ENCODE measurements at regions of chr7 and their contacts with region 1.

Region 1: GRCh38 chr7:28621369-28621841 is 209.1 kb downstream of the CREB5 start:
- DNase-seq: peak; percentile 45
- ATAC-seq: peak; percentile 82
- H3K4me3 ChIP-seq: no peak overlapping the region
- H3K27ac ChIP-seq: peak overlapping the region; percentile 45; the same call in 1 of the 2 replicates
- H3K4me1 ChIP-seq: peaks cover 3% of the 10 kb centered on the region; the same call in 1 of the 2 replicates
- H3K27me3 ChIP-seq: no peaks in the 10 kb centered on the region
- CTCF ChIP-seq: no peak
- EP300 ChIP-seq: peak; percentile 76 to 90; a peak in 3 of 4 replicates
- POLR2A ChIP-seq: no peak
- RAD21 ChIP-seq: 0 out of 2 replicates have a peak, but pooled peaks have one; percentile 19

Region 2: DNA sequence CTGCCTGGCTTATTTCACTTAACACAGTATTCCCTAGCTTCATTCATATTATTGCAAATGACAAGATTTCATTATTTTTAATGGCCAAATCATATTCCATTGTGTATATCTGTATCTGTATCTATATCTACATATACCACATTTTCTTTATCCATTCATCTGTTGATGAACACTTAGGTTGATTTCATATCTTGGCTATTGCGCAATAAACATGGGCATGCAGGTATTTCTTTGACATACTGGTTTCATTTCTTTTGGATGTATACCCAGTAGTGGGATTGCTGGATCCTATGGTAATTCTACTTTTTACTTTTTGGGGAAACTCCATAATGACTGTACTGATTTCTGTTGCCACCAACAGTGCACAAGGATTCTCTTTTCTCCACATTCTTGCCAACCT is 277.9 kb before region 1 on chr7:
- CTCF ChIA-PET with region 1: no interaction called
- POLR2A ChIA-PET with region 1: no interaction called
- RAD21 ChIA-PET with region 1: no interaction called
- SMC1A ChIA-PET with region 1: no interaction called
- in situ Hi-C with region 1: no loop called
- intact Hi-C with region 1: no loop called
- DNase-seq: no peak
- ATAC-seq: no peak
- H3K4me3 ChIP-seq: no peak overlapping the region
- H3K27ac ChIP-seq: no peak overlapping the region
- H3K4me1 ChIP-seq: no peaks in the 10 kb centered on the region
- H3K27me3 ChIP-seq: peaks cover 0 to 7% of the 10 kb centered on the region in 2 experiments; a peak in 1 of 4 replicates
- CTCF ChIP-seq: no peak
- EP300 ChIP-seq: no peak
- POLR2A ChIP-seq: no peak
- RAD21 ChIP-seq: no peak

Region 3: GRCh38 chr7:28520074-28521015 is 101.1 kb before region 1 on chr7:
- CTCF ChIA-PET with region 1: interaction called, 3 read pairs
- POLR2A ChIA-PET with region 1: no interaction called
- RAD21 ChIA-PET with region 1: no interaction called
- SMC1A ChIA-PET with region 1: interaction called, 11 read pairs
- in situ Hi-C with region 1: no loop called
- intact Hi-C with region 1: no loop called
- DNase-seq: no peak
- ATAC-seq: no peak
- H3K4me3 ChIP-seq: no peak overlapping the region
- H3K27ac ChIP-seq: no peak overlapping the region
- H3K4me1 ChIP-seq: peaks cover 14% of the 10 kb centered on the region
- H3K27me3 ChIP-seq: no peaks in the 10 kb centered on the region
- CTCF ChIP-seq: no peak
- EP300 ChIP-seq: no peak
- POLR2A ChIP-seq: no peak
- RAD21 ChIP-seq: no peak

Region 4: DNA sequence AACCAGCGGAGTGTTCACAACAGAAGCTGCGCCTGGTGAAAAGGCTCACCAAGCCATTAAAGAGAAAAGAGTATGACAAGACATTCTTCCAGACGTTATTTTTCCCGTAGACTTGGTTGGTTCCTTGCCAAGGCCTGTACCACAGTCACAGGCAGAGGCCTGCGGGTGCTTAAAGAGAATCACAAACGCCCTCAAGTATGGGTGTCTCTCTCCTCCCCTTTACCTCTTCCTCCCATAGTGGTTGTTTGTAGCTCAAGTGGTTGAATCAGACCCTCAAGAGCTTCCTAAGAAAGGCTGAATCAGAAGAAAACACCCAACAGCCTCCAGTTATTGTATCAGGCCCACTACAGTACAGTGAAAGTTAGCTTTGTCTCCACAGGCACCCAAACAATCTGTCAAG is 40.1 kb before region 1 on chr7:
- CTCF ChIA-PET with region 1: interaction called, 22 read pairs
- POLR2A ChIA-PET with region 1: interaction called, 9 read pairs
- RAD21 ChIA-PET with region 1: interaction called, 130 read pairs
- SMC1A ChIA-PET with region 1: interaction called, 151 read pairs
- in situ Hi-C with region 1: no loop called
- intact Hi-C with region 1: no loop called
- DNase-seq: no peak
- ATAC-seq: peak; percentile 25; the same call in 2 of the 3 replicates
- H3K4me3 ChIP-seq: no peak overlapping the region
- H3K27ac ChIP-seq: no peak overlapping the region
- H3K4me1 ChIP-seq: no peaks in the 10 kb centered on the region
- H3K27me3 ChIP-seq: no peaks in the 10 kb centered on the region
- CTCF ChIP-seq: no peak
- EP300 ChIP-seq: no peak
- POLR2A ChIP-seq: no peak
- RAD21 ChIP-seq: no peak

Region 5: GRCh38 chr7:28608731-28609130 is 12.7 kb before region 1 on chr7:
- CTCF ChIA-PET with region 1: interaction called, 9 read pairs
- POLR2A ChIA-PET with region 1: interaction called, 3 read pairs
- RAD21 ChIA-PET with region 1: interaction called, 12 read pairs
- SMC1A ChIA-PET with region 1: interaction called, 16 read pairs
- in situ Hi-C with region 1: no loop called
- intact Hi-C with region 1: no loop called
- DNase-seq: no peak
- ATAC-seq: no peak
- H3K4me3 ChIP-seq: no peak overlapping the region
- H3K27ac ChIP-seq: no peak overlapping the region
- H3K4me1 ChIP-seq: no peaks in the 10 kb centered on the region; the same call in 1 of the 2 replicates
- H3K27me3 ChIP-seq: no peaks in the 10 kb centered on the region; a peak in 1 of 4 replicates
- CTCF ChIP-seq: no peak
- EP300 ChIP-seq: no peak
- POLR2A ChIP-seq: no peak
- RAD21 ChIP-seq: no peak

Region 6: DNA sequence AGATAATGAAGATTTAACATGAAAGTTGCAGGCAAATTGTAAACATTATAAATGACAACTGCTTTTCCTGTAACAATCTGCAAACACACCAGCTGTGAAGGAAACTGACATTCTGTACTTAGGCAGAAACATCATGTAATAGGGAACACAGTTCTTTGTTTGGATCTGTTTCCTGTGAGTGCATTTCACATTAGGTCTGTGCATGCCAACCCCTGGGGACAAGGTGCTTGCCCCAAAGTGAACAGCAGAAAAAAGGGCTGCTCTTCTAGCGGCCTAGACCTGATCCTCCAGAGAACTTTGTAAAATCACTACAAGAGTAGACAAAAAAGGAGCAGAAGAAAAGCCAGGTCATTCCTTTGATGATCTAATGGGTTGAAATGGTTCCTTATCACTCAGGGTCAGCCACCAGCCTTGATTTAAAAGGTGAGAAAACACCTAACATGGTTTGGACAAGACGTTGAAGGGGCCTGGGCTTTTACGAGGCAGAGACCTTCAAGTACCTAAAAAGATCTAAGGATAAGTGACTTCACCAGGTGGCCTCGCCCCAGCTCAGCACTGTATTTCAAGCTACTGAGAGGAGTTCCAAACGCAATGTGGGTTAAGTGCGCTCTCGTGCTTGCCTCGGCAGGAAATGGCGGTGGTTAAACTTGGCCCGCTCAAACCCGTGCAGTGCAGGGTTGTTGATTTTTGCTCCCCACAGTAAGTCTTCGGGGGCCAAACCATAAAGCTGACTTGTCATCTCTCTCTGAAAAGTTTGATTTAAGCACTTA is 40.6 kb after region 1 on chr7:
- CTCF ChIA-PET with region 1: no interaction called
- POLR2A ChIA-PET with region 1: no interaction called
- RAD21 ChIA-PET with region 1: no interaction called
- SMC1A ChIA-PET with region 1: no interaction called
- in situ Hi-C with region 1: no loop called
- intact Hi-C with region 1: no loop called
- DNase-seq: no peak
- ATAC-seq: peak; percentile 79
- H3K4me3 ChIP-seq: no peak overlapping the region
- H3K27ac ChIP-seq: peak overlapping the region; percentile 25
- H3K4me1 ChIP-seq: peaks cover 9% of the 10 kb centered on the region
- H3K27me3 ChIP-seq: no peaks in the 10 kb centered on the region
- CTCF ChIP-seq: no peak
- EP300 ChIP-seq: no peak
- POLR2A ChIP-seq: peak; percentile 35; the same call in 1 of the 2 replicates
- RAD21 ChIP-seq: no peak

Region 7: DNA sequence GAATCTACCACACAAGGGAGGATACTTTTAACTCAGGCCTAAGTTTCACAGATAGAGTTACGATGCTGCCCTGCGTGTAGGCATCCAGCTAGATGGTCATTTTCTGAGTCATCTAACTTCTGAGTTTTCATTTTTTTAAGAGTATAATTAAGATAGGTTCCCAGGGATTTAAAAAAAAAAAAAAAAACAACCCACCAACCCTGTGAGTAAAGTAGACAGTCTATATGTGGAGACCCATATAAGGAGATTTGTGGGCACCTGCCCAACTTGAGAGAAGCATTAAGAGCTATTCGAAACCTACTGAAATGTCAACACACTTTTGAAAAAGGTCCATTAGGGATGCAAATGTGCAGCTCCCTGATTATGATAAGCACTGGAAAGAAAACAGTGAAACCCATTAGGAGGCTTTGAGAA is 79.4 kb after region 1 on chr7:
- CTCF ChIA-PET with region 1: no interaction called
- POLR2A ChIA-PET with region 1: interaction called, 10 read pairs
- RAD21 ChIA-PET with region 1: no interaction called
- SMC1A ChIA-PET with region 1: interaction called, 8 read pairs
- in situ Hi-C with region 1: no loop called
- intact Hi-C with region 1: no loop called
- DNase-seq: no peak
- ATAC-seq: peak; percentile 23
- H3K4me3 ChIP-seq: no peak overlapping the region
- H3K27ac ChIP-seq: no peak overlapping the region
- H3K4me1 ChIP-seq: peaks cover 18% of the 10 kb centered on the region
- H3K27me3 ChIP-seq: no peaks in the 10 kb centered on the region
- CTCF ChIP-seq: no peak
- EP300 ChIP-seq: no peak
- POLR2A ChIP-seq: no peak
- RAD21 ChIP-seq: no peak

Region 8: DNA sequence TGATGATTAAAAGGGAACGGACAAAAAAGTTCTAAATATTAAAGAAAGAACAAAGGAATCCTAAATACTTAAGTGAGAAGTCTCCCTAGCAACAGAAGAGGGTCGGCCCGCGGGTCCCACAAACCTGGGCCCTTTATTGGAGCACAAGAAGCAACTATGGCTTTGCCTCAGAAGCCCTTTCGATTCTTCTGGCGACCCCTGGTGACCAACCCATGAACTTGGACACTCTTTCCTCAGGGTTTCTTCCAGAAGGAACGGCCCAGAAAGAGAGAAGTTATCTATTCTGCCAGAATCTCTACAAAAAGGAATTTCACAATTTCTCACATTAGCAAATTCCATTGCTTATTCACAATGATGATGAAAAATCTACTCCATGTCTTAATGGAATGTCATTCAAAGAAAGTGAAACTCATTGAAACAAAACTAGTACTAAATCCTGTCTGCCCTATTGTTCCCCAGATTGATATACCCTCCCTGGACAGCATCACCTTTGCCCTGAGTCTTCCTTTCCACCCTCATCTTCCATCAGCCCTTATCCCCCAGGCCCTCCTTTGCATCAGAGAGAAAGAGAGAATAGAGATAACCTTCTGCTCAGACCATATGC is 481.2 kb after region 1 on chr7:
- CTCF ChIA-PET with region 1: no interaction called
- POLR2A ChIA-PET with region 1: no interaction called
- RAD21 ChIA-PET with region 1: no interaction called
- SMC1A ChIA-PET with region 1: no interaction called
- in situ Hi-C with region 1: no loop called
- intact Hi-C with region 1: no loop called
- DNase-seq: no peak
- ATAC-seq: peak; percentile 61
- H3K4me3 ChIP-seq: no peak overlapping the region
- H3K27ac ChIP-seq: no peak overlapping the region
- H3K4me1 ChIP-seq: no peaks in the 10 kb centered on the region
- H3K27me3 ChIP-seq: peaks cover 0 to under 1% of the 10 kb centered on the region in 2 experiments; a peak in 2 of 4 replicates
- CTCF ChIP-seq: peak; percentile 44 to 64 (median 46)
- EP300 ChIP-seq: no peak
- POLR2A ChIP-seq: no peak
- RAD21 ChIP-seq: peak; percentile 58

Measured in GM12878 (cell line).